ENCODE measurements at regions of chr5 and their contacts with region 1.

Region 1: GRCh38 chr5:141387233-141387949 is at the start of gene PCDHGB4:
- DNase-seq: no peak
- H3K4me3 ChIP-seq: peak within 1 kb of the TSS; percentile 22; the same call in 1 of the 2 replicates
- H3K27me3 ChIP-seq: no peaks in the 10 kb centered on the region
- CTCF ChIP-seq: peak; percentile 60
- polyA plus RNA-seq, gene PCDHGB4: 11.8 and 12.2 TPM in 2 replicates

Region 2: GRCh38 chr5:141369994-141370848 is 17.2 kb before region 1 on chr5 and contains the start of gene PCDHGB3:
- CTCF ChIA-PET with region 1: interaction called, 16 read pairs
- POLR2A ChIA-PET with region 1: no interaction called
- DNase-seq: no peak
- H3K4me3 ChIP-seq: peak within 1 kb of the TSS; percentile 24
- H3K27me3 ChIP-seq: no peaks in the 10 kb centered on the region; the same call in none of the 2 replicates
- CTCF ChIP-seq: peak; percentile 61
- polyA plus RNA-seq, gene PCDHGB3: 2.7 and 3.0 TPM in 2 replicates

Region 3: DNA sequence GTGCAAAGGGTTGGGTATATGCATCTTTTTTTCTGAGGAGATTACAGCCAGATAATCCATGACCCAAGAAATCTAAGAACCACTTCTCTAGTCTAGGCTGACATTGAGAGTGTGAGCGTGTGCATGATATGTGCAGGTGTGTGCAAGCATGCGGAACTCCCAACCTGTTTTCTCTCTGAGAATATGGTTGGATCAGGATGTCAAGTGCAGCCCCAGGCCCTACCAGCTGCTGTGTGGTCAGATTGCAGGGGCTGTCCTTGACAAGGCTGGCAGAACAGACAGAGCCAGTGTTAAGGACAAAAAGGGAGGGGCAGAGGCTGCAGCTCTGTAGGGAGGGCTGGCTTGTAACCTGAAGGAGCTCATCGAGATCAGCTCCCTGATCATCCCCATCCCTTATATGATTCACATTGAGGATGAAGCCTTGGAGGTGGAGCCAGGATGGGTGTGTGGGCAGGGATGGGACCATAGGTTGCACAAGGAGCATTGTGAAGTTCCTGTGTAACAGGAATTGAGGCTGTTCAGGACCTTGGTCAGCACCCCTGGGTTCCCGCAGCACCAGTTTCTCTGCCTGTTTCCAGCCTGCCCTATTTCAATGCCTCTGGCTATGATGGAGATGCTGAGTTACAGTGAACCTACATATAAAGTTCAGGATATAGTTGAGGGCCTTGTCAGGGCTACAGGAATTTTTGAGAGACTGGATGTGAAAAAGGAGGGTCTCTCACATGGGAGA is 347.3 kb after region 1 on chr5:
- CTCF ChIA-PET with region 1: no interaction called
- POLR2A ChIA-PET with region 1: no interaction called
- DNase-seq: no peak
- H3K4me3 ChIP-seq: no peak overlapping the region
- H3K27me3 ChIP-seq: peaks cover 4% of the 10 kb centered on the region
- CTCF ChIP-seq: no peak